Mammary epithelial cell (primary cell): ENCODE measurements at regions of chr7 and their contacts with region 1.

Region 1: GRCh38 chr7:130063036-130063435 is 7.3 kb upstream of the KLHDC10 start:
- DNase-seq: no peak
- H3K4me3 ChIP-seq: no peak overlapping the region
- H3K27ac ChIP-seq: no peak overlapping the region
- H3K4me1 ChIP-seq: no peaks in the 10 kb centered on the region
- H3K27me3 ChIP-seq: no peaks in the 10 kb centered on the region
- CTCF ChIP-seq: peak; percentile 77 to 83

Region 2: GRCh38 chr7:130021105-130021834 is 41.8 kb before region 1 on chr7:
- CTCF ChIA-PET with region 1: no interaction called
- dilution Hi-C with region 1: loop called (anchors 5 kb)
- in situ Hi-C with region 1: no loop called
- intact Hi-C with region 1: no loop called
- DNase-seq: no peak
- H3K4me3 ChIP-seq: no peak overlapping the region
- H3K27ac ChIP-seq: no peak overlapping the region
- H3K4me1 ChIP-seq: peaks cover 9% of the 10 kb centered on the region
- H3K27me3 ChIP-seq: no peaks in the 10 kb centered on the region
- CTCF ChIP-seq: no peak

Region 3: DNA sequence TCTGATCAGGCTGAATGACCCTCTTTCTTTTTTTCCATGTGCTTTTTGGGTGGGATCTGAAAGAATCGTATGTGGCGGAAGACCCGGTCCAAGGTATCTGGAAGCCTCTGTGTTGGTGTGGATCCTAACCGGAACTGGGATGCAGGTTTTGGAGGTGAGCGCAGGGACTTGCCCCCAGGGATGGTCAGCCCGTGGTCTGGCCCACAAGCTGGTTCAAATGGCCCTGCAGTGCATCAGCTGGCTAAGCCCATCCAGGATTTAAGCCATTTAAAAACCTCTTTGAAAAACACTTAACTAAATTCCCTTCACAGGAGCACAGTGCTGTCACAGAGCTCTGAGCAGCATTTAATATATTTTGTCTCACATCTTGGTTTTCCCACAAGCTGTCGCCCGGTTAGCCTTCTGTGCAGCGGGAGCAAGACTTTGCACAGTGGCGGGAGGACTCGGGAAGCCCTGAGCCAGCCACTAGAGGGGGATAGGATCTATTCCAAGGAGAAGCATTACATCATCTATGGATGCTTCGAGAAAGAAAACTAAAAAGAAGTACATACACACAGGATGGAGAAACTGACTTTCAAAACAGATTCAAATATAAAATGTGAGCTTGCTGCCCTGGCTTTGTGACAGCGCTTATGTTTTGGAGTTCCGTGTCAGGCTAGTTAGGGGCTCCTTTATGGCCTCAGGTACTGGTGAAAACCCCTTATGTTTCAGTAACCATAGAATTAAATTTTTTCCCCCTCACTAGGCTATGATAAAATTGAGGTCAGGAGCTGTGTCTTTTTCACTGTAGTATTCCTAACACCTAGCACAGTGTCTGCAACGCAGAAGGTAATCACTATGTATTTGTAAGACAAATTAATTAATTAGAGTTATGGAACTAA is 215.0 kb after region 1 on chr7:
- CTCF ChIA-PET with region 1: no interaction called
- dilution Hi-C with region 1: no loop called
- in situ Hi-C with region 1: no loop called
- intact Hi-C with region 1: no loop called
- DNase-seq: no peak
- H3K4me3 ChIP-seq: no peak overlapping the region
- H3K27ac ChIP-seq: no peak overlapping the region
- H3K4me1 ChIP-seq: peaks cover 76% of the 10 kb centered on the region
- H3K27me3 ChIP-seq: no peaks in the 10 kb centered on the region
- CTCF ChIP-seq: peak in 1 of 2 donors; percentile 17

Region 4: GRCh38 chr7:130345120-130345519 is 282.1 kb after region 1 on chr7:
- CTCF ChIA-PET with region 1: no interaction called
- dilution Hi-C with region 1: no loop called
- in situ Hi-C with region 1: no loop called
- intact Hi-C with region 1: no loop called
- DNase-seq: no peak
- H3K4me3 ChIP-seq: no peak overlapping the region
- H3K27ac ChIP-seq: no peak overlapping the region
- H3K4me1 ChIP-seq: peaks cover 4% of the 10 kb centered on the region
- H3K27me3 ChIP-seq: no peaks in the 10 kb centered on the region
- CTCF ChIP-seq: no peak

Region 5: DNA sequence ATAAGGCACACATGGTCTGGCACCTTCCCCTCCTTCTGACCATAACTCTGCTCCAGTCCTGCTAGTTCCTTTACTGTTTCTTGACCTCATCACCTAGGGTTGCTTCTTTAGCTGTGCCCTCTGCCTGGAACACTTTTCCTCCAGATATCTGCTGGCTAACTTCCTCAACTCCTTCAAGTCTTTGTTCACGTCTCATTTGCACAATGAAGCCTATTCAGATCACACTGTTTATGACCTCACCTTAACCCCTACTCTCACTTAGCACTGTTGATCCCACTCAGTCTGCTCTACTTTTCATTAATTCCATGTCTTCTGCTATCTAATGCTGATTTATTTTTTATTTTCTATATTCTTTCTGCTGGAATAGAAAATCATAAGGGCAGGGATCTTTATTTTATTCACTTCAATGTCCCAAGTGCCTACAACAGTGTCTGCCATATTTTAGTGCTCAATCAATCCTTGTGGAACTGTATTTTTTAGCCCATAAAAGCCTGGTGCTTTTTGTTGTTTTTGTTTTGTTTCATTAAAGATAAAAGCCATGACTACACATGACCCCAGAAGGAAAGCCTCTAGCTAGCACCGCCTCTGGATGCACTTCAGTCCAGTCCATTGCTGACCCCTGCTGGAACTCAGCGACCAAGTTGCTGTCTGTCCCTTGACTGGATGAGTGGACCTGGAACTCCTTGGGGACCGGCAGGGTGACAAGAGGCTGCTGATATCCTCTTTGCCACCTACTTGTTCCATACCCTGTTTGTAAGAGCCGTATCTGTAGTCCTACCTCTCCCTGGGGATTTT is 658.6 kb after region 1 on chr7:
- CTCF ChIA-PET with region 1: interaction called, 14 read pairs
- dilution Hi-C with region 1: no loop called
- in situ Hi-C with region 1: no loop called
- intact Hi-C with region 1: no loop called
- DNase-seq: peak; percentile 32
- H3K4me3 ChIP-seq: no peak overlapping the region
- H3K27ac ChIP-seq: no peak overlapping the region
- H3K4me1 ChIP-seq: no peaks in the 10 kb centered on the region
- H3K27me3 ChIP-seq: peaks cover 2% of the 10 kb centered on the region
- CTCF ChIP-seq: peak; percentile 26 to 61